ENCODE measurements at regions of chr1 and their contacts with region 1.

Region 1: GRCh38 chr1:179867807-179868330 is 9.7 kb downstream of the TOR1AIP2 start:
- DNase-seq: peak; percentile 34
- ATAC-seq: peak; percentile 71
- H3K4me3 Mint-ChIP-seq: no peak overlapping the region
- H3K27ac Mint-ChIP-seq: no peak overlapping the region
- H3K4me1 Mint-ChIP-seq: peaks cover 18% of the 10 kb centered on the region
- H3K27me3 Mint-ChIP-seq: no peaks in the 10 kb centered on the region
- CTCF ChIP-seq: peak; percentile 50

Region 2: GRCh38 chr1:179984101-179984500 is 116.2 kb after region 1 on chr1:
- CTCF ChIA-PET with region 1: no interaction called
- POLR2A ChIA-PET with region 1: no interaction called
- intact Hi-C with region 1: no loop called
- DNase-seq: no peak
- ATAC-seq: no peak
- H3K4me3 Mint-ChIP-seq: no peak overlapping the region
- H3K27ac Mint-ChIP-seq: no peak overlapping the region
- H3K4me1 Mint-ChIP-seq: peaks cover 23% of the 10 kb centered on the region
- H3K27me3 Mint-ChIP-seq: no peaks in the 10 kb centered on the region
- CTCF ChIP-seq: no peak

Region 3: DNA sequence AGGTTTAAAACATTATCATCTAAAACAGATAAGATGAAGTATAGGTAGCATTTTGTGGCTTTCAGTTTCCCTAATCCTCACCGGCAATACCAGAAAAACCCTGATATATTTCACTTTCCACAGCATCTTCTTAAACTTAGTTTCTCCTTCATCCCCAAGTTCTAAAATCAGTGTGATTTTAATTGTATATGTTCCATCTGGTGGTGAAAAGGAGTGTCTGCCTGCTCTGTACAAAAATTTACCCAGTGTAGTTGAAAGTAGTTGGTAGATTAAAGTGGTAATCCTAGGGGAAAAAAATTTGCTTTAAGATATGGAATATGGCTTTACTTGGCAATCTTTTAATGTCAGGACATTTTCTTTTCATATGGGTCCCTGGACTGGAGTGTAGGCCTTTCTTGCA is 161.0 kb after region 1 on chr1:
- CTCF ChIA-PET with region 1: interaction called, 4 read pairs
- POLR2A ChIA-PET with region 1: no interaction called
- intact Hi-C with region 1: loop called (anchors 1 kb)
- DNase-seq: no peak
- ATAC-seq: no peak
- H3K4me3 Mint-ChIP-seq: no peak overlapping the region
- H3K27ac Mint-ChIP-seq: no peak overlapping the region
- H3K4me1 Mint-ChIP-seq: no peaks in the 10 kb centered on the region
- H3K27me3 Mint-ChIP-seq: no peaks in the 10 kb centered on the region
- CTCF ChIP-seq: no peak

Region 4: DNA sequence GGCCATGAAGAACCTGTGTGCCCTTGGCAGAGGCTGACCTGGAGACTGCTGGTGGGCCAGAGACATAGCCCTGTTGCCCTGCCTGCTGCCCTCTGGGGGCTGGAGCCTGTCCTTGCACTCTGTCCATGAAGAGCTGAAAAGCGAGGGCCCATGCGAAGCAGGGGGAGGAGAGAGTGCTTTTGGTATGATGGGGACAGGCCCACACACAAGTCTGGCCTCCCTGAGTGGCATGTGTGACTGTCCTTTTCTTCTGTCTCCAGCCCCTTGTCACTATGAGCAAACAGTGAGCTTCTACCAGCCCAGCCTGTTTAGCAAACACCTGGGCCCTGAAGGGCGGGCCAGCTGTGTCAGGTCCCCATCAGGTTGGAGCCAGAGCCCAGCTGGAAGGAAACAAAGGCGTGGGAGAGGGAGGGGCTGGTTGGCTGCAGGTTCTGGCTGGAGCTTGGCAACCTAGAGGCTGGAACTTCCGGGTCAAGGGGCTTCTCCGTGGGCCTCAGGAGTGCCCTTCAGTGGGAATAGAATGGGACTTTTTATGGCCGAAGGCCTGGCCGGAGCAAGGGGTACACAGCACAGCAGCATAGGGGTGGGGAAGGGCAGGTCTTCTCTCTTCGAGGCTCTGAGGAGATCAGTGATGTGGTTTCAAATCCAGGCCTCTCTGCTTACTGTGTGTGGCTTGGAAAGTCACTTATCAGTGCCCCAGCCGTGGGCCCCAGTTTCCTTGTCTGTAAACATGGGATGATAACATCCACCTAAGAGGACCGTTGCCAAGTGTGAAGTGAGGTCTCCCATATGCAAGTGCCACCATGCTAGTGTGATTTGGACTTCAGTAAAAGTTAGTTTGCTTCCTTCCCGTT is 301.1 kb after region 1 on chr1:
- CTCF ChIA-PET with region 1: interaction called, 4 read pairs
- POLR2A ChIA-PET with region 1: no interaction called
- intact Hi-C with region 1: loop called (anchors 1 kb)
- DNase-seq: no peak
- ATAC-seq: peak; percentile 68
- H3K4me3 Mint-ChIP-seq: no peak overlapping the region
- H3K27ac Mint-ChIP-seq: no peak overlapping the region
- H3K4me1 Mint-ChIP-seq: no peaks in the 10 kb centered on the region
- H3K27me3 Mint-ChIP-seq: no peaks in the 10 kb centered on the region
- CTCF ChIP-seq: no peak